ENCODE measurements at regions of chr10 and their contacts with region 1.

Region 1: DNA sequence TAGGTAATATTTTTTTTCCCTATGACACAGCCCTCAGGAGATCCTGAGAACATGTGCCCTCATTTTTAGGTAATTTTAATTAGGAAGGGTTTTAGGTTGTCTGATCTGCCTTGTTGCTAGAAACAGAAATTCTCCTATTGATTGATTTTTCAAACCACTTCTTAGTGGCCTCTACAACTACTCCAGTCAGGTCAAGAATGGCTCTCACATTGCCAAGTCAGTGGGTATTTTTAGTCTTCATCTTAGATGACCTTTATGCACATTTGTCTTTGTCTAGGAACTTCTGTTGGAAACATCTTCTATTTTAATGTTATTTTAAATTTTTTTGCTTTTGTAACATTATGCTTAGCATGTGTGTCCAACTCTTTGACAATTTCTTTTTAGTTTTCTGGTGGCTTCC is 162.3 kb downstream of the MLLT10 start:
- DNase-seq: no peak

Region 2: DNA sequence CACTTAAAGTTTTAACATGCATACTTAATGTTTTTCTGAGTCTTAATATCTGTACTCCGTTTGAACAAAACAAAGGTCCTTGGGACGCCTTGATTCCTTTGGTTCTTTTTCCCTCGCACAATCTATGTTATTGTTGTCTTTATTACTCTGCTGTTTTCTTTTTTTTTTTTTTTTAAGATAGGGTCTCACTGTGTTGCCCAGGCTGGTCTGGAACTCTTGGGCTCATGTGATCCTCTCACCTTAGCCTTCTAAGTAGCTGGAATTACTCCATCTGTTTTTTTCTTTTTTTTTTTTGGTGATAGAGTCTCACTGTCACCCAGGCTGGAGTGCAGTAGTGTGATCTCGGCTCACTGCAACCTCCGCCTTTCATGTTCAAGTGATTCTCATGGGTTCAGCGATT is 149.1 kb before region 1 on chr10:
- CTCF ChIA-PET with region 1: interaction called, 10 read pairs
- POLR2A ChIA-PET with region 1: no interaction called
- DNase-seq: no peak

Region 3: GRCh38 chr10:21843645-21844044 is 147.3 kb after region 1 on chr10:
- CTCF ChIA-PET with region 1: no interaction called
- POLR2A ChIA-PET with region 1: no interaction called
- DNase-seq: no peak

Measured in HEK293T (cell line).